B cell (primary cell): ENCODE measurements at regions of chr22 and their contacts with region 1.

Region 1: DNA sequence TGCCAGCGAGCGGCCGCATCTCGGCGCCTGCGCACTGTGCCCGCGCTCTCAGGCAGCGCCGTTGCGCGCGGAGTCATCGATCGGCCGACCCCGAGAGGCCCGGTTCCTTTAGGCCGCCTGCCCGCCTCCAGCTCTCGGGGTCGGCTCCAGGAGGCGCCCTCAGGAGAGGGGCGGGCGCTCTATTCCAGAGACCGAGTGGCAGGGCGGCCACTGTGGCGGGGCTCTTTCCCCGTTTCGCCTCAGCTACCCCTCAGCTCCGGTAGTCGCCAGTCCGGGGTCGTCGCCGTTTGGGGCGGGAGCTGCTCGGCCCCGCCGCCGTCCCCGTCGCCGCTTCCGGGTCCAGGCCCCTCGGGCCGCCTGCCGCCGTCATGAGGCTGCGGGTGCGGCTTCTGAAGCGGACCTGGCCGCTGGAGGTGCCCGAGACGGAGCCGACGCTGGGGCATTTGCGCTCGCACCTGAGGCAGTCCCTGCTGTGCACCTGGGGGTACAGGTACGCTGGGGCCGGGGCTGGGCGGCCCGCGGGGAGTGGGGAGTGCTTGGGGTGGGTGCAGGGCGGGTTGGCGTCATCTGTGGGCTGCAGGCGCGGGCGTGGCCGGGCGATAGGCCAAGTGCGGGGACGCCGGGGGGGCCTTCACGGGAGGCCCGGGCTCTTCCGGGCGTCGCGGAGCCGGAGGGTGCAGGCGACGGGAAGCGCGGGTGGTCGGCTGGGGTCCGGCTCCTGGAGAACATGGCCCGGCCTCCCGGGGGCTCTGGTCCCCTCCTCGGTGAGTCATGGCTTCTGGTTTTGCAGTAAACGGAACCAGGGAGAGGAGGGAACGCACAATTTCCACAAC is at the start of gene FBXO7:
- DNase-seq: peak; percentile 94
- ATAC-seq: peak; percentile 83
- H3K4me3 ChIP-seq: peak within 1 kb of the TSS; percentile 61 to 81 (median 72)
- H3K4me3 Mint-ChIP-seq: peak within 1 kb of the TSS; percentile 97
- H3K27ac ChIP-seq: peak within 1 kb of the TSS; percentile 86 to 98
- H3K27ac Mint-ChIP-seq: peak within 1 kb of the TSS; percentile 94
- H3K4me1 ChIP-seq: peaks cover 26 to 32% of the 10 kb centered on the region in 2 donors
- H3K4me1 Mint-ChIP-seq: peaks cover 32% of the 10 kb centered on the region
- H3K27me3 ChIP-seq: no peaks in the 10 kb centered on the region
- H3K27me3 Mint-ChIP-seq: no peaks in the 10 kb centered on the region
- CTCF ChIP-seq: peak; percentile 44
- total RNA-seq, gene FBXO7: 103 and 106 TPM in 2 replicates

Region 2: DNA sequence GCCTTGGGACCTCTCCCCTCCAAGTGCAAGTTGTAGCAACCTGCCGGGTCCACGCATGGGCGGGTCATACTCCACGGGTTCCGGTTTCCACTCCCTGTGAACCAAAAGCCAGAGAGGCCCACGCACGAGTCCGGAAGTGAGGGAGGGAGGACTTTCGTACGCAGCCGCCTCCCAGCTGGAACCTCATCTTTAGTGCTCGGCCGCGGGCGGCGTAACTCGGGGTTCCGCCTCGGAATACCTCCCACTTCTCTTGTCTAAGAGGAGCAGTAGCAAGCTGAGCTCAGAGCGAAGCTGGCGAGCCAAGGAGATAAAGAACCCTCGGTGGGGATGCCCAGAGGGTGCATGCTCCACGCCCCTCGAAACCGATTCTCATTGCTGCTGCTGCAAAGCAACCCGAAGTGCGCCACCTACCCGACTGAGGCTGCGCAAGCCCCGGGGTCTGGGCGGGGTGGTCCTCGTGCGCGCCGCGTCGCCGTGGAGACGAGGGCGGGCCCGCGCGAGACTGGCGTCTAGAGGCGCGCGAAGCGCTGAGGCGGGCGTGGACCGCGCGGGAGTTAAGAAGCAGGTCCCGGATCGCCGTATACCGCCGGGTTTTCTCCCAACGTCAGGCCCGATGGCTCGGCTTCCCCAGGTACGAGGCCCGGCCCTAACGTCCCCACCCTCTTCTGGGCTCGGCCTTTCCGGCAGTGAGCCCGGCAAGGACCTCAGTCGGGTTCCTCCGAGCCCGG is 978.7 kb before region 1 on chr22 and contains the start of gene SFI1:
- CTCF ChIA-PET with region 1: no interaction called
- POLR2A ChIA-PET with region 1: no interaction called
- intact Hi-C with region 1: loop called (anchors 10 kb)
- DNase-seq: peak; percentile 97
- ATAC-seq: peak; percentile 87
- H3K4me3 ChIP-seq: peak within 1 kb of the TSS; percentile 71 to 88 (median 80)
- H3K4me3 Mint-ChIP-seq: peak within 1 kb of the TSS; percentile 97
- H3K27ac ChIP-seq: peak within 1 kb of the TSS; percentile 83 to 85
- H3K27ac Mint-ChIP-seq: peak within 1 kb of the TSS; percentile 97
- H3K4me1 ChIP-seq: peaks cover 25 to 45% of the 10 kb centered on the region in 2 donors
- H3K4me1 Mint-ChIP-seq: peaks cover 39% of the 10 kb centered on the region
- H3K27me3 ChIP-seq: no peaks in the 10 kb centered on the region
- H3K27me3 Mint-ChIP-seq: no peaks in the 10 kb centered on the region
- CTCF ChIP-seq: peak; percentile 34
- total RNA-seq, gene SFI1: 182 and 191 TPM in 2 replicates

Region 3: DNA sequence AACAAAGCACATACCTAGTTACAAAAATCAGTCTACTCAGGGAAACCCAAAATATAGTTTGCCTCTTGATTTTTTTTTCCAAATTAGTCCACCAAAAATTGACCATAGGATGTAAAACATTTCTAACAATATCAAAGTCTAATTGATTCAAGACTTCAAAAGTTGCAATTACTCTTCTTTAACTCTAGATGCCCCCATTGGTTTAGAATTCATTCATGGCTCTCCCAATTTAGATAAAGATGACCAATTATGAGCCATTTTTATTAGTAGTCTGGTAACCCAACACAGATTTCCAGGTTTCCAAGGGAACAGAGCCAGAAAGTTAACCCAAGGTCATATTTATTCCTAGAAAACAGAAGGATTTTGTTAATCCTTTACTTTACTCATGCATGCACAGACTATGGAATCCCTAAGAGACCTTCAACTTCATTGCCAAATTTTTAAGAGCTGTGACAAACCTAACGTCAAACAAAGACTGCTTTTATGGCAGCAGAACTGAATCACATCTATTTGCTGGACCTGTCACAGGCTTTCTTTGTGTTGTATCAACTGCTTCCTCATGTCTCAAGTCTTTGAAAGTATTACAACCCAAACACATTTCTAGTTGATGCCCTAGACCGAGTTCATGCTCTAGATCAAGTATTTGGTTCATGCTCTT is 371.1 kb before region 1 on chr22:
- CTCF ChIA-PET with region 1: interaction called, 4 read pairs
- POLR2A ChIA-PET with region 1: no interaction called
- intact Hi-C with region 1: loop called (anchors 1 kb)
- DNase-seq: peak; percentile 41
- ATAC-seq: no peak
- H3K4me3 ChIP-seq: no peak overlapping the region
- H3K4me3 Mint-ChIP-seq: no peak overlapping the region
- H3K27ac ChIP-seq: no peak overlapping the region
- H3K27ac Mint-ChIP-seq: no peak overlapping the region
- H3K4me1 ChIP-seq: no peaks in the 10 kb centered on the region
- H3K4me1 Mint-ChIP-seq: no peaks in the 10 kb centered on the region
- H3K27me3 ChIP-seq: peaks cover 0 to 5% (median 2%) of the 10 kb centered on the region in 4 experiments
- H3K27me3 Mint-ChIP-seq: peaks cover 37% of the 10 kb centered on the region
- CTCF ChIP-seq: peak; percentile 79

Region 4: DNA sequence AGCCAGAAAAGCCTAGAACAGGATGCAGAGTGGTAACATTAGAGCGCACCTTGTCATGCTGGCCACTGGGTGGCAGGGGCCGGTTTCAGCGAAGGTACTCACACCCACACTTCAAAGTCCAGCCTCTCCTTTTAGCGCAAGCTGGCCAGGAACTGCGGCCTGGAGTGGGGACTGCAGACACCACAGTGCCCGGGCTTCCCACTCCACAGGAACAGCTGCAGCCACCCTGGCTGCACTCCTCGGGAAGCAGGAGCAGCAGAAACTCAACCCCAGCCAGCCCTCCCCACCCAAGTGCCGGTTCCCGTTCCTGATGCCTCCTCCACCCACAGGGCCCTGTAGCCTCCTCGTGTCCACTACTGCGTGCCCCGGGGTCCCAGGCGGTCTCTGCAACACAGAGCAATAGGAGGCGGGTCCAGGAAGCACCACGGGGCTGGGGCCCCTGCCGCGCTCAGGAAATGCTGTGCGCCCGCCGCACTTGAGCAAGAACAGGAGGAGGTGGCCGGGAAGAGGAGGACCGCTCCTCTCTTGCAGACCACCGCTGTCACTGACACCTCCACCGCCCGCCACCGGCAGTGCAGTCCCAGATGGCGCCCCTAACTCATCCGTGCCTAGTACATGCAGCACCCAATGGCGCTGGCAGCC is 272.2 kb before region 1 on chr22:
- CTCF ChIA-PET with region 1: interaction called, 3 read pairs
- POLR2A ChIA-PET with region 1: no interaction called
- intact Hi-C with region 1: loop called (anchors 1 kb)
- DNase-seq: peak; percentile 28
- ATAC-seq: no peak
- H3K4me3 ChIP-seq: peak overlapping the region in 1 of 5 experiments; percentile 7
- H3K4me3 Mint-ChIP-seq: peak overlapping the region; percentile 30
- H3K27ac ChIP-seq: no peak overlapping the region
- H3K27ac Mint-ChIP-seq: no peak overlapping the region
- H3K4me1 ChIP-seq: peaks cover 6 to 8% of the 10 kb centered on the region in 2 donors
- H3K4me1 Mint-ChIP-seq: peaks cover 4% of the 10 kb centered on the region
- H3K27me3 ChIP-seq: peaks cover 0 to 24% (median 5%) of the 10 kb centered on the region in 4 experiments
- H3K27me3 Mint-ChIP-seq: peaks cover 36% of the 10 kb centered on the region
- CTCF ChIP-seq: peak; percentile 49

Region 5: GRCh38 chr22:32411829-32412592 is 62.8 kb before region 1 on chr22 and contains the start of gene RTCB:
- CTCF ChIA-PET with region 1: interaction called, 6 read pairs
- POLR2A ChIA-PET with region 1: interaction called, 5 read pairs
- intact Hi-C with region 1: loop called (anchors 1 kb)
- DNase-seq: peak; percentile 94
- ATAC-seq: peak; percentile 76
- H3K4me3 ChIP-seq: peak within 1 kb of the TSS; percentile 94 to 99 (median 99)
- H3K4me3 Mint-ChIP-seq: peak within 1 kb of the TSS; percentile 97
- H3K27ac ChIP-seq: peak within 1 kb of the TSS; percentile 77 to 91
- H3K27ac Mint-ChIP-seq: peak within 1 kb of the TSS; percentile 97
- H3K4me1 ChIP-seq: peaks cover 37 to 39% of the 10 kb centered on the region in 2 donors
- H3K4me1 Mint-ChIP-seq: peaks cover 56% of the 10 kb centered on the region
- H3K27me3 ChIP-seq: peaks cover 0 to 7% (median 2%) of the 10 kb centered on the region in 4 experiments
- H3K27me3 Mint-ChIP-seq: peaks cover 8% of the 10 kb centered on the region
- CTCF ChIP-seq: no peak
- total RNA-seq, gene RTCB: 60.1 and 60.6 TPM in 2 replicates

Region 6: DNA sequence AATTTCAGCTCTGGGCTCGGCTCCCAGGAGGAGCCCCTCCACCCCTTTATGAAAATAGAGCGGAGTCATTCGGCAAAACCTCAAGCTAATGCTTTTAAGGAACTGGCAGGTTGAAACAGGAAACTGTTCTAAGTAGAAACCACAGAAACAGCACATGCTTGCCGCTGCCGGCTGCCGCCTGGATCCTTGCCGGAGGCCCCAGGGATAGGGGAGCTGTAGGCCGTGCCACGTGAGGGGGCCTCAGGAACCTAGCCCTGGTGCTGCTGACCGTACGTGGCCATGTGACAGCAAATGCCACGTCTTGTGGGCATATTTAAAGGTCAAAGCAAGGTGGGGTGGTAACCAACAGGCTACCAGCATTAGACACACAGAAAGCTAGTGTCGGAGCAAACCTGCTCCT is 248.8 kb after region 1 on chr22:
- CTCF ChIA-PET with region 1: no interaction called
- POLR2A ChIA-PET with region 1: no interaction called
- intact Hi-C with region 1: no loop called
- DNase-seq: peak; percentile 48
- ATAC-seq: no peak
- H3K4me3 ChIP-seq: no peak overlapping the region
- H3K4me3 Mint-ChIP-seq: peak overlapping the region; percentile 18
- H3K27ac ChIP-seq: no peak overlapping the region
- H3K27ac Mint-ChIP-seq: no peak overlapping the region
- H3K4me1 ChIP-seq: peaks cover 13 to 14% of the 10 kb centered on the region in 2 donors
- H3K4me1 Mint-ChIP-seq: peaks cover 15% of the 10 kb centered on the region
- H3K27me3 ChIP-seq: peaks cover 0 to 35% (median 7%) of the 10 kb centered on the region in 4 experiments
- H3K27me3 Mint-ChIP-seq: peaks cover 43% of the 10 kb centered on the region
- CTCF ChIP-seq: no peak